CD4-positive, alpha-beta memory T cell (primary cell): ENCODE measurements at regions of chr14 and their contacts with region 1.

Region 1: GRCh38 chr14:63632932-63633514 is 8.6 kb downstream of the WDR89 start:
- DNase-seq: peak in 4 of 5 donors; percentile 51 to 57 (median 52)
- H3K4me3 ChIP-seq: no peak overlapping the region
- H3K4me3 Mint-ChIP-seq: no peak overlapping the region
- H3K27ac ChIP-seq: no peak overlapping the region
- H3K27ac Mint-ChIP-seq: peak overlapping the region in 1 of 7 donors; percentile 47
- H3K4me1 ChIP-seq: peaks cover 18% of the 10 kb centered on the region
- H3K4me1 Mint-ChIP-seq: peaks cover 25 to 44% (median 35%) of the 10 kb centered on the region in 4 donors
- H3K27me3 ChIP-seq: no peaks in the 10 kb centered on the region
- H3K27me3 Mint-ChIP-seq: no peaks in the 10 kb centered on the region

Region 2: GRCh38 chr14:63388763-63389431 is 244.1 kb before region 1 on chr14:
- CTCF ChIA-PET with region 1: interaction called, 3 read pairs
- POLR2A ChIA-PET with region 1: no interaction called
- intact Hi-C with region 1: loop called (anchors 2 kb)
- DNase-seq: peak; percentile 26 to 37 (median 32)
- H3K4me3 ChIP-seq: no peak overlapping the region
- H3K4me3 Mint-ChIP-seq: no peak overlapping the region
- H3K27ac ChIP-seq: no peak overlapping the region
- H3K27ac Mint-ChIP-seq: peak overlapping the region in 1 of 7 donors; percentile 57
- H3K4me1 ChIP-seq: peaks cover 4% of the 10 kb centered on the region
- H3K4me1 Mint-ChIP-seq: peaks cover 0 to 5% (median 1%) of the 10 kb centered on the region in 4 donors
- H3K27me3 ChIP-seq: no peaks in the 10 kb centered on the region
- H3K27me3 Mint-ChIP-seq: no peaks in the 10 kb centered on the region

Region 3: GRCh38 chr14:63401646-63402045 is 231.4 kb before region 1 on chr14:
- CTCF ChIA-PET with region 1: no interaction called
- POLR2A ChIA-PET with region 1: no interaction called
- intact Hi-C with region 1: no loop called
- DNase-seq: no peak
- H3K4me3 ChIP-seq: no peak overlapping the region
- H3K4me3 Mint-ChIP-seq: no peak overlapping the region
- H3K27ac ChIP-seq: no peak overlapping the region
- H3K27ac Mint-ChIP-seq: peak overlapping the region in 1 of 7 donors; percentile 71
- H3K4me1 ChIP-seq: no peaks in the 10 kb centered on the region
- H3K4me1 Mint-ChIP-seq: peaks cover 8 to 21% (median 15%) of the 10 kb centered on the region in 4 donors
- H3K27me3 ChIP-seq: no peaks in the 10 kb centered on the region
- H3K27me3 Mint-ChIP-seq: no peaks in the 10 kb centered on the region

Region 4: DNA sequence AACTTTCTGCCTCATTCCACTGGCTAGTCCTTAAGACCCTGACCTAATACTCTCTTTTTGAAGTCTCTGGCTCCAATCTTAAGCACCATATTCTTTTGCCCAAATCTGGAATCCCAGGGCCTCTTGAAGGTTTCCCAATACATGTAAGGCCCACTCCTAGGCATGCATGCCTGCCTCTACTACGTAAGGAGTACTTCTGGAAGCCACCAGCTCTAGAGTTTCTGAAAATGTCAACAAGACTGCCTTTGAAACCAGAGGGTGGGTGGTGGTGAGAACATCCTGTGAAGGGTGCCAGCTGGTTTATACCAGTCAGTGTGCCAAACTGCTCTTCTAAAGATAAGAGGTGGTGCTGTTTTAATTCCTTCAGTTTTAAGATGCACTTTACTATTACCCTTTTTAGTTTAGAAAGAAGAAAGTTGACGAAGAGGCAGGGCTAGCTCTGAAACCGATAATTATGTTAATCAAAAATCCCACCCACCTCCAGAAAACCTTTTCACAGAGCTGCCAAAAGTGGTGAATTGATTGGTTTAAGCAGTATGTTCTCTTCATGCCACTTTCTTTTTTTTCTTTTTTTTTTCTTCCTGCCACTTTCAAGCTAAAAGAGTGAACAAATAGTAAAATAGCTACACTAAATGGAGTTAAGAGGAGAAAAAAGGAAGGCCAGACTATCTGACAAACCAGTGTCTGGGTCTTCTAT is 17.4 kb after region 1 on chr14:
- CTCF ChIA-PET with region 1: interaction called, 7 read pairs
- POLR2A ChIA-PET with region 1: interaction called, 151 read pairs
- intact Hi-C with region 1: no loop called
- DNase-seq: peak; percentile 72 to 79 (median 74)
- H3K4me3 ChIP-seq: peak overlapping the region in 1 of 2 donors; percentile 1
- H3K4me3 Mint-ChIP-seq: peak overlapping the region in 7 of 8 donors; percentile 66 to 80 (median 77)
- H3K27ac ChIP-seq: peak overlapping the region; percentile 56
- H3K27ac Mint-ChIP-seq: peak overlapping the region; percentile 92 to 100 (median 97)
- H3K4me1 ChIP-seq: peaks cover 41% of the 10 kb centered on the region
- H3K4me1 Mint-ChIP-seq: peaks cover 19 to 39% (median 29%) of the 10 kb centered on the region in 4 donors
- H3K27me3 ChIP-seq: no peaks in the 10 kb centered on the region
- H3K27me3 Mint-ChIP-seq: no peaks in the 10 kb centered on the region

Region 5: GRCh38 chr14:63727774-63728728 is 95.0 kb after region 1 on chr14 and contains the start of gene SGPP1:
- CTCF ChIA-PET with region 1: interaction called, 7 read pairs
- POLR2A ChIA-PET with region 1: interaction called, 4 read pairs
- intact Hi-C with region 1: loop called (anchors 2 kb)
- DNase-seq: peak; percentile 81 to 86 (median 83)
- H3K4me3 ChIP-seq: peak within 1 kb of the TSS; percentile 57 to 80
- H3K4me3 Mint-ChIP-seq: peak within 1 kb of the TSS; percentile 98 to 100 (median 99)
- H3K27ac ChIP-seq: peak within 1 kb of the TSS; percentile 68
- H3K27ac Mint-ChIP-seq: peak within 1 kb of the TSS; percentile 86 to 98 (median 97)
- H3K4me1 ChIP-seq: peaks cover 31% of the 10 kb centered on the region
- H3K4me1 Mint-ChIP-seq: peaks cover 25 to 53% (median 43%) of the 10 kb centered on the region in 4 donors
- H3K27me3 ChIP-seq: no peaks in the 10 kb centered on the region
- H3K27me3 Mint-ChIP-seq: no peaks in the 10 kb centered on the region
- total RNA-seq, gene SGPP1: 12.2 to 12.4 TPM